PC-9 (cell line): ENCODE measurements at regions of chr5 and their contacts with region 1.

Region 1: DNA sequence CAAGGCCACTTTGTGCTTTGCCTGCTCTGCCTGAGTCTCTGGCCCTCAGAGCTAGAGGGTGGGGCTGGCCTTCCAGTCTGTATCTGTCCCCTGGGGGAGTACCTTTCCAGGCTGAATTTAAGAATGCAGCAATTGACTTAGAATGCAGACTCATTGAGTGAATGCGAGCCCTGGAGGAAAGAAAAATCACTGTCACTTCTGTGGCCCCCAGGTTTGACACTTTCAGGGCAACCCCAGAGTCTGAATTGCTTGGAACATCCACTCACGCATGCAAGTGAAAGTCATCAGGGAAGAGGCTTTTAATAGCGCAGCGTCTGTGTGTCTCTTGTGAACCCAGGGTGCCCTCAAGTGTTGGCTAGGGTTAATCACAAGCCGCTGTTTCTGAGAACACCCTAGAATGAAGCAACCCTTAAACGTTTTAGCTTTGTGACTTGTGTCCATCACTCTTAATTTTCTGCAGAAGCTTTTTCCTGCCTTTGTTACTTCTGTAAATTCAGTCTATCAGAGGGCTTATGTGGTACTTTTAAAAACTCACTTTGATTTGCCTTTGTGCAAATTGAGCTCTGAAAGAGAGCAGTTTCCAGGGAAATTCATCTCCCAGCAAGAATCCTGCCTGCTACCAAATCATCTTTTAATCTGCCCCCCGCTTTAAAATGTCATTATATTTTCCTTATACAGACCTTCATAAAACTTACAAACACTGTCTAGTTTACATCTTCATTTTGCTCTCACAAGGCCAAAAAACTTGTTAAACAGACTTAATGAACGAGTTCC is 146.8 kb upstream of the IQGAP2 start:
- DNase-seq: peak; percentile 33 to 58
- H3K4me3 ChIP-seq: no peak overlapping the region
- H3K27ac ChIP-seq: no peak overlapping the region
- H3K4me1 ChIP-seq: no peaks in the 10 kb centered on the region
- H3K27me3 ChIP-seq: no peaks in the 10 kb centered on the region
- CTCF ChIP-seq: peak; percentile 68

Region 2: GRCh38 chr5:75734913-75735789 is 521.2 kb before region 1 on chr5:
- CTCF ChIA-PET with region 1: no interaction called
- POLR2A ChIA-PET with region 1: no interaction called
- intact Hi-C with region 1: loop called (anchors 1 kb)
- DNase-seq: peak in 1 of 2 experiments; percentile 5
- H3K4me3 ChIP-seq: no peak overlapping the region
- H3K27ac ChIP-seq: no peak overlapping the region
- H3K4me1 ChIP-seq: no peaks in the 10 kb centered on the region
- H3K27me3 ChIP-seq: peaks cover 8% of the 10 kb centered on the region; the same call in 1 of the 2 replicates
- CTCF ChIP-seq: peak; percentile 64

Region 3: DNA sequence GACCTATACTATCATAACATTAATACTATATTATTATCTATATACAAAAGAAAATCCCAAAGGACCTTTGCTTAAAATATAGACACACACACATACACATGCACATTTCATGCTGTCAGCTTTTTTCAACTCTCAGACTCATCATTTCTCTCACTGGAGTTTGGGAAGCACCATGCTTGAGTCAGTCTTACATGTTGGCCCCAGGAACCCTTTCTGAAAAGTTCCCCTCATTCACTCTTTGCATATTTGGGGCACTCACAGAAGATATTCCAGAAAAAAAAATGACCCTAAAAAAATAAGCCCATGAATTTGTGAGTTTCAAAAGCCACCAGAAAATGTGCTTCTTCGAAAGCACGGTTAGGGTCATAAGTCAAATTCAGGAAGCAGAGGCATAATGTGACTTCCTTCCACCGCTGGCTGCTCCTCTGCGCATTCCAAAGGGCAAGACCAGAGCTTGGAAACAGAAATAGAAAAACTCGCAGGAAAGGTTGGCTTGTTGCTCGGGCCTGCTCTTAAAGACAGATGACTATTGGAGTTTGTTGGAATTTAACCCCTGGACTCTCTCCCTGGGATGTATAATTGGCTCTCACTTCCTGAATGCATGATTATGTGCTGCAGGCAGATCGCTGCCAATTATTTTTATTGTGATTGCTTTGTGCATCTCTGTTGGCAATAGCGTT is 17.0 kb after region 1 on chr5:
- CTCF ChIA-PET with region 1: no interaction called
- POLR2A ChIA-PET with region 1: no interaction called
- intact Hi-C with region 1: no loop called
- DNase-seq: no peak
- H3K4me3 ChIP-seq: no peak overlapping the region
- H3K27ac ChIP-seq: no peak overlapping the region
- H3K4me1 ChIP-seq: no peaks in the 10 kb centered on the region
- H3K27me3 ChIP-seq: no peaks in the 10 kb centered on the region
- CTCF ChIP-seq: no peak

Region 4: DNA sequence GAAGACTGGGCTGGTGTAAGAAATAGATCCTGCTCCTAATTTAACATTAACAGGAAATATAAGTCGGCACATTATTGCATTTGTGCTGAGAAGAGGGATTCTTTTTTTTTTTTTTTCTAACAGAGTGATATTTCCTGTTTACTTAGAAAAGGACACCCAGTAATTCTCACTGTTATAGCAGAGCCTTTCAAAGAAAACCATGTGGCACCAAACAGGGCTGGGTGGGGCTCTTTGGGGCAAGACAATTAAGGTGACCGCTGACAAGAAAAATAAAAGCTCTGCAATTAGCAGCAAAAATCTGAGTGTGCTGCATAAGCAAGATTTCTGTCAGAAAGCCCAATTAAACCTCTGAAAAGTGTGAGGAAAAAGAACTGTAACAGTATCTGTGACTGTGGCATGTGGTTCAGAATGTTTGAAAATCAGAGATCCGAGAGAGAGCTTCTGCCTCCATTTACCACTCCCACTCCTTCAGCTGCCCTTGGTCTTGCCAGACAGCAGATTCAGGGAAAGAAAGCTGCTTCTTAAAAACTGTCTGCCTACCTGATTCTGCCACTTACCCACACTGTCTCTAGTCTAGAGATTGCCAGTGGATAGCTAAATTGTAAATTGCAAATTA is 69.7 kb after region 1 on chr5:
- CTCF ChIA-PET with region 1: no interaction called
- POLR2A ChIA-PET with region 1: no interaction called
- intact Hi-C with region 1: no loop called
- DNase-seq: no peak
- H3K4me3 ChIP-seq: no peak overlapping the region
- H3K27ac ChIP-seq: no peak overlapping the region
- H3K4me1 ChIP-seq: no peaks in the 10 kb centered on the region
- H3K27me3 ChIP-seq: peaks cover 5% of the 10 kb centered on the region; the same call in 1 of the 2 replicates
- CTCF ChIP-seq: no peak